Calu3 (cell line): ENCODE measurements at regions of chr10 and their contacts with region 1.

Region 1: GRCh38 chr10:78972947-78973900 is 95.5 kb upstream of the ZMIZ1 start:
- DNase-seq: peak; percentile 88
- H3K4me3 Mint-ChIP-seq: peak overlapping the region; percentile 65
- H3K27ac Mint-ChIP-seq: peak overlapping the region; percentile 93
- H3K4me1 Mint-ChIP-seq: peaks cover 65% of the 10 kb centered on the region
- H3K27me3 Mint-ChIP-seq: no peaks in the 10 kb centered on the region
- CTCF ChIP-seq: no peak

Region 2: DNA sequence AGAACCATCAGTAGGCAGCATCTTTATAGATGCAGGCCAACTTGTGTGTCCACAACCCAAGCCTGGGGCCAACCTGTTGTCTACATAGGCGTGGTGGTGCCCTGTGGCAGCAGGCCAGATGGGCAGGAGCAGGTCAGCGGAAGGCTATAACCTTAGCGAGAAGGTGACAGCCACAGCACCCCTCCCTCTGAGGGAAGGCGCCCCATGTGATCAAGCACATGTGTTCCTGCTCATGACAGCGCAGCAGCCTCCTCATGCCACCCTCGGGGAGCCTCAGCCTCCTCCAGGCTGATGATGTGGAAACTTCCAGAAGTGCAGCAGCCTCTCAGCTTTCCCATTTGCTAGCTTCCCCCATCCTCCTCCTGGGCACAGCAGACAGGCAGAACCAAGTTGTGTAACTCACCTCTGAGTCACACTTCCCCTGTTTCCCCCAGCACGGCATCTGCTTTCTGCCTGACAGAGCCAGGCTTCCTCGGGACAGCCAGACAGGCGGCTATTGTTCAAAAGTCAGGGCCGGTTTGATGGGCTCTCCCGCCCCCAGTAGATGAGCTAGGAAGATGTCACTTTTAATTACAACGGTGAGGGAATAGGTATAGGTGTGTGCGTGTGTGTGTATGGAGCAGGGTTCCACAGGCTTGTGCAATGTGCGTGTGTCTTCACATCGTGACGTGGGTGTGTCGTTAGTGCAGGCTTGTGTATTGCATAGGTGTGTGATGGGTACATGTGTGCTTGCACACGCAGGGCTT is 216.4 kb before region 1 on chr10:
- CTCF ChIA-PET with region 1: interaction called, 3 read pairs
- intact Hi-C with region 1: loop called (anchors 10 kb)
- DNase-seq: peak; percentile 89
- H3K4me3 Mint-ChIP-seq: peak overlapping the region; percentile 4
- H3K27ac Mint-ChIP-seq: peak overlapping the region; percentile 43
- H3K4me1 Mint-ChIP-seq: peaks cover 29% of the 10 kb centered on the region
- H3K27me3 Mint-ChIP-seq: peaks cover 5% of the 10 kb centered on the region
- CTCF ChIP-seq: no peak

Region 3: DNA sequence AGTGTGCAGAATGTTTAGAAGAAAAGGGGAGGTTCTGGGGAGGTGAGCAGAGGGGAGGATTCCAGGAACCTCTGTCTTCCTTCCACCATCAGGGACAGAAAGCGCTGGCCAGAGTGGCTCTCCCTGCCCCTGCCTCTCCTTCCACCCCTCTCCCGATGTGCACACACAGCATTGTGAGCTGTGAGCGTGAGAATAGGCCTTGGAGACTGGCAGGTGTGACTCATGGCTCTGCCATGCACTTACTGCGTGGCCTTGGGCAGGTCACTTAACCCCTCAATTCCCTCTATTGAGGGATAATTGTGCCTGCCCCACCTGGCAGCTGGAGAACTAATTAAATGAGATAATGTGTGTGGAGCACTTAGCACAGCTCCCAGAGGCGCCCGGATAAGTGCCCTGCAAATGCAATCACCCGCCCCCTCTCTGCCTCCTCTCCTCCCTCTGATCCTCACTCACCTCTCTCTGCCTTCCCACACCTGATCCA is 211.0 kb after region 1 on chr10:
- CTCF ChIA-PET with region 1: no interaction called
- intact Hi-C with region 1: loop called (anchors 2 kb)
- DNase-seq: peak; percentile 86
- H3K4me3 Mint-ChIP-seq: peak overlapping the region; percentile 10
- H3K27ac Mint-ChIP-seq: peak overlapping the region; percentile 48
- H3K4me1 Mint-ChIP-seq: peaks cover 78% of the 10 kb centered on the region
- H3K27me3 Mint-ChIP-seq: no peaks in the 10 kb centered on the region
- CTCF ChIP-seq: no peak

Region 4: DNA sequence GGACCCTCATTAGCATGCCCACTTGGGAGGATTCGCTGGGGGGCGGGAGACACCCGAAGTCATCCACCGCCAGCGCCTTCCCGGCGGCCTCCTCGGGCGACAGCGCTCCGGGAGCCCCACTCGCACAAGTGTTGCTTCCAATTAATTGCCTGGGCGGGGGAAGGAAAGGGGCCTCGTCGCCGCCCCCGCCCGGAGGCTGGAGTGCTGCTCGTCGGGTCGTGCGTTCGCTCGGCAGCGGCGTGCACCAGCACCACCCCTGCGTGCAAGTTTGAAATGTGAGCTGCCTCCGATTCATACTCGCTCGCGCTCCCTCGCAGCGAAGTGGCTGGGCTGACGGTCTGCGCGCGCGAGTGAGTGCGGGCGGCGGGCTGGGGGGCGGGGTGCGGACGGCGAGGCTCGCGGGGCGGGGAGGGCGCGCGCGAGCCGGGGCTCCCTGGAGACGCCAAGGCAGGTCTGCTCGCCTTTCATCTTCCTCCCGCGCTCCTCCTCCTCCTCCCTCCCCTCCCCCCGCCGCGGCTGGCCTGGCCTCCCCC is 269.5 kb after region 1 on chr10:
- CTCF ChIA-PET with region 1: no interaction called
- intact Hi-C with region 1: no loop called
- DNase-seq: peak; percentile 57
- H3K4me3 Mint-ChIP-seq: peak overlapping the region; percentile 65
- H3K27ac Mint-ChIP-seq: no peak overlapping the region
- H3K4me1 Mint-ChIP-seq: peaks cover 28% of the 10 kb centered on the region
- H3K27me3 Mint-ChIP-seq: no peaks in the 10 kb centered on the region
- CTCF ChIP-seq: no peak